ENCODE measurements at regions of chr5 and their contacts with region 1.

Region 1: DNA sequence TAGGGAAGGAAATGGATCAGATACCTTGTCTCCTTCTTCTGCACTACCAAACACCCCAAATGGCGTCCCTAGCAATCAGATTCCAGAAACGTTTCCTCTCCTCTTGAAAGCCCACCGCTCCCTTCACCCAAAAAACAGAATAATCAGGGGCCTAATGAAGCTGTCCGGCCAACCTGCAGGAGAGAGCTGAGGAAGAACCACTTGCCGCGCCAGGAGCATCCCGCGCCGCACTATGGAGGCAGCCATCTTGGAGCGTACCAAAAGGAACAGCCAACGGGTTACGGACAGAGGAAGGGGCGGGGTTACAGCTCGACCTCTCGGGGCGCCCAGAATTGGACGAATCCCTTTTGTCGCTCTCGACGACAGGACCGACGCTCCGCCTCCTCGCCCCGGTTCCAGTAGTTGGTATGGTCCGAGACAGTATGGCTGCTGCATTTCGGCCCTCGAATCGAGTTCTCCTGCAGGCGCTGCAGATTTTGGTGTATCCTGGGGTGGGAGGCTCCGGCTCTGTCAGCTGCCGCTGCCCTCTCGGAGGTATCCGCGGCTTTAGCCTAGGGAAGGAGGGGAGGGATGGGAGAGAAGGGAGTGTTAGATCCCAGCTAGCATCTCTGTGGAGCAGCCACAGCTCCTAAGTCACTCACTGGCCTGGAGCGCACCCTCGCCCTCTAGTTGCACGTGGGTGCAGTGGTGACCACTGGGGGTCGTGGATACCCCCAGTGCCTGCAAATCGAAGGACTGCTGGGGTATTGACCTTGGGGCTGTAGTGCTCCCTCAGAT is at the starts of genes MRPS27 and PTCD2:
- DNase-seq: peak; percentile 71 to 96 (median 94)
- ATAC-seq: peak; percentile 100
- H3K4me3 ChIP-seq: peak within 1 kb of the TSS; percentile 93
- H3K4me3 Mint-ChIP-seq: peak within 1 kb of the TSS; percentile 93 to 100 (median 98)
- H3K27ac ChIP-seq: peak within 1 kb of the TSS; percentile 89
- H3K27ac Mint-ChIP-seq: peak within 1 kb of the TSS; percentile 88 to 99 (median 95)
- H3K4me1 ChIP-seq: peaks cover 7 to 14% of the 10 kb centered on the region in 2 donors
- H3K4me1 Mint-ChIP-seq: peaks cover 24 to 65% (median 47%) of the 10 kb centered on the region in 7 donors
- H3K27me3 ChIP-seq: no peaks in the 10 kb centered on the region
- H3K27me3 Mint-ChIP-seq: no peaks in the 10 kb centered on the region
- total RNA-seq, gene MRPS27: 36.6 to 54.0 (median 39.5) TPM
- total RNA-seq, gene PTCD2: 5.0 to 12.6 (median 11.2) TPM

Region 2: DNA sequence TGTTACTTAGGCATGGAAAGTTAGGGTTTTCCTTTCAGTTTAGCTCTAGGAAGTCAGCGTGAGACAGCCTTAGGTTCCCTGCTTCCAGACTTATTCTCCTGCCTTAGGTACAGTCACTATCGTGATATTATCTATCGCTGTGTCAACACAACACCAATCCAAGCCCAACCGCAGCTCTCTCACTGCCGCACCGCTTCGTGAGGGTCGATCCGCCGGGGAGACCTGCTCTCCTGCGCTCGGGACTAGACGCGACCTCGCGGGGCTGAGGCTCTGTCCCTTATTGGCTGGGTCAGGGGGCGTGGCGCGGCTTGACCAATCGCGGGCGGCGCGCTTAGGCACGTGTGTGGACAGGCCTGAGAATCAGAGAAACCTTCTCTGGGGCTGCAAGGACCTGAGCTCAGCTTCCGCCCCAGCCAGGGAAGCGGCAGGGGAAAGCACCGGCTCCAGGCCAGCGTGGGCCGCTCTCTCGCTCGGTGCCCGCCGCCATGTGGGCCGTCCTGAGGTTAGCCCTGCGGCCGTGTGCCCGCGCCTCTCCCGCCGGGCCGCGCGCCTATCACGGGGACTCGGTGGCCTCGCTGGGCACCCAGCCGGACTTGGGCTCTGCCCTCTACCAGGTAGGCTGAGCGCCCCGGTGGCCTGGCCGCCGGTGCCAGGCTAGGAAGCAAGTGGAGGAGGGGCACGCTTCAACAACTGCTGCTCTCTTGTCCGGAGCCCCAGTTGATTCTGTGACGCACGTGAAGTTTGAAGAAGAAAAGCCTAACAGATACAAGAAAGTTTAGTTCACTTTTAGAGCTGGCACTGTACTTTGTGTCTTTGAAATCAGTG is 733.0 kb before region 1 on chr5 and contains the start of gene MCCC2:
- CTCF ChIA-PET with region 1: no interaction called
- POLR2A ChIA-PET with region 1: no interaction called
- intact Hi-C with region 1: loop called (anchors 5 kb)
- DNase-seq: peak; percentile 91 to 95 (median 95)
- ATAC-seq: peak; percentile 99
- H3K4me3 ChIP-seq: peak within 1 kb of the TSS; percentile 98
- H3K4me3 Mint-ChIP-seq: peak within 1 kb of the TSS; percentile 87 to 99 (median 94)
- H3K27ac ChIP-seq: peak within 1 kb of the TSS; percentile 87
- H3K27ac Mint-ChIP-seq: peak within 1 kb of the TSS; percentile 85 to 99 (median 97)
- H3K4me1 ChIP-seq: peaks cover 16 to 34% of the 10 kb centered on the region in 2 donors
- H3K4me1 Mint-ChIP-seq: peaks cover 26 to 49% (median 36%) of the 10 kb centered on the region in 7 donors
- H3K27me3 ChIP-seq: no peaks in the 10 kb centered on the region
- H3K27me3 Mint-ChIP-seq: no peaks in the 10 kb centered on the region
- total RNA-seq, gene MCCC2: 22.4 to 41.0 (median 29.8) TPM

Region 3: GRCh38 chr5:72427488-72428437 is 107.6 kb after region 1 on chr5:
- CTCF ChIA-PET with region 1: no interaction called
- POLR2A ChIA-PET with region 1: no interaction called
- intact Hi-C with region 1: no loop called
- DNase-seq: no peak
- ATAC-seq: no peak
- H3K4me3 ChIP-seq: no peak overlapping the region
- H3K4me3 Mint-ChIP-seq: no peak overlapping the region
- H3K27ac ChIP-seq: no peak overlapping the region
- H3K27ac Mint-ChIP-seq: no peak overlapping the region
- H3K4me1 ChIP-seq: no peaks in the 10 kb centered on the region
- H3K4me1 Mint-ChIP-seq: no peaks in the 10 kb centered on the region
- H3K27me3 ChIP-seq: no peaks in the 10 kb centered on the region
- H3K27me3 Mint-ChIP-seq: peaks cover 16 to 38% (median 29%) of the 10 kb centered on the region in 5 donors